ENCODE measurements at regions of chr2 and their contacts with region 1.

Region 1: DNA sequence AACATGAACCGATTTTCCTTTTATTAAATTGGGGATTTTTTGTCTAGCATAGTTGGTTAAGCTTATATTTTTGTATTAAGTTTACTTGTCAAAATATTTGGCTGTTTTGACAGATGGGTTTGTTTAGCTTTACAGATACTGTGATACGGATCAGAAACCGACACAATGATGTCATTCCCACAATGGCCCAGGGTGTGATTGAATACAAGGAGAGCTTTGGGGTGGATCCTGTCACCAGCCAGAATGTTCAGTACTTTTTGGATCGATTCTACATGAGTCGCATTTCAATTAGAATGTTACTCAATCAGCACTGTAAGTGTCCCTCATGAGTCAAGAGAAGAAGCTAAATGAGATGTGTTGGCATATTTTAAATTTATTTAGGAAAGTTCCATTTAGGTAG is 8.5 kb downstream of the PDK1 start:
- DNase-seq: no peak
- H3K4me3 Mint-ChIP-seq: no peak overlapping the region
- H3K27ac Mint-ChIP-seq: no peak overlapping the region
- H3K4me1 Mint-ChIP-seq: peaks cover 50% of the 10 kb centered on the region
- H3K27me3 Mint-ChIP-seq: no peaks in the 10 kb centered on the region

Region 2: GRCh38 chr2:172578054-172578453 is 13.7 kb after region 1 on chr2:
- CTCF ChIA-PET with region 1: no interaction called
- intact Hi-C with region 1: loop called (anchors 1 kb)
- DNase-seq: no peak
- H3K4me3 Mint-ChIP-seq: no peak overlapping the region
- H3K27ac Mint-ChIP-seq: peak overlapping the region; percentile 27
- H3K4me1 Mint-ChIP-seq: peaks cover 45% of the 10 kb centered on the region
- H3K27me3 Mint-ChIP-seq: no peaks in the 10 kb centered on the region

Region 3: GRCh38 chr2:173148520-173148919 is 584.1 kb after region 1 on chr2:
- CTCF ChIA-PET with region 1: no interaction called
- intact Hi-C with region 1: no loop called
- DNase-seq: no peak
- H3K4me3 Mint-ChIP-seq: no peak overlapping the region
- H3K27ac Mint-ChIP-seq: no peak overlapping the region
- H3K4me1 Mint-ChIP-seq: peaks cover 21% of the 10 kb centered on the region
- H3K27me3 Mint-ChIP-seq: peaks cover 7% of the 10 kb centered on the region

Region 4: GRCh38 chr2:174350593-174351181 is 1786.3 kb after region 1 on chr2:
- CTCF ChIA-PET with region 1: no interaction called
- intact Hi-C with region 1: no loop called
- DNase-seq: no peak
- H3K4me3 Mint-ChIP-seq: no peak overlapping the region
- H3K27ac Mint-ChIP-seq: no peak overlapping the region
- H3K4me1 Mint-ChIP-seq: no peaks in the 10 kb centered on the region
- H3K27me3 Mint-ChIP-seq: peaks cover 2% of the 10 kb centered on the region

Measured in activated naive CD4-positive, alpha-beta T cell treated with anti-CD3 and anti-CD28 coated beads for 36 hours (primary cell).